ENCODE measurements at regions of chr4 and their contacts with region 1.

Region 1: DNA sequence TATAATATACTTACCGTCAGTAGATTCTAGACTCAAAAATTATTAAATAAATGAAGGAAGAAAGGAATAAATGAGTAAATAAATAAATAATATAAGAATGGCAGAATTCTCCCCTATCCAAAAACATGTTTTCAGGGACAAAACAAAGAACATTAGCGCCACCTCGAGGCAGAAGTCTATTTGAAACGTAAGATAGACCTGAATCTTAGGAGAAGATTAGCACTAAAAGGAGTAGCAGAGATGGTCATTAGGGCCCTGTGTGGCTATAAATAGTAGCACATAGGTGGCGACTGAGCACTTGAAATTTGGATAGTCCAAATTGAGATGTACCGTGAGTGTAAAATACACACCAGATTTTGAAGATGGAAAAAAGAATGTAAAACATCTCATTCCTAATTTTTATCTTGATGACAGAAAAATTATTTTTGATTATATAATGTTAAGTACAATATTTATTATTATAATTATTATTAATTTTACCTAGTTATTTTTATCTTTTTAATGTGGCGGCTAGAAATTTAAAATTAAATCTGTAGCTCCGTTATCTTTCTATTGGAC is 24.3 kb upstream of the SRD5A3 start:
- DNase-seq: peak; percentile 25
- CTCF ChIP-seq: peak; percentile 45

Region 2: DNA sequence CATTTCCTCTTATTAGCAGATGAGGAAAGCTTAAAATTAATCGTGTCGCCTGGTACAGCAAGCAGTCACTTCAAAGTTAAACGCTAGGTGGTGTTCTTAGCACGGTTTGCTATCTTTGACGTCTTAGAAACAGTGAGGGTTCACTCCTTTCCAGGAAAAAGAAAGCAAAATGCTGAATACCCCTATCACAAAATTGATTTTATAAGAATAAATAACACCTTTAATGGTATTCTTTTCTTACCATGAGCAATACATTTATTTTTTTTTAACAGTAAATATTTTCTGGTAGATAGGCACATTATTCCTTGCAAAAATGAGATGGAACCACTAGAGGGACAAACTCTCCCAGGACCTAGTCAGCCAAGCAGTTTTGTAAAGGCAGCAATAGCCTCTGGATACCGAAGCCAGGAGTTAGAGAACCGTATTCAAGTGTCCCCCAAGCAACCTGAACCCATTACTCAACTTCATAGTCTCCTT is 350.3 kb before region 1 on chr4:
- CTCF ChIA-PET with region 1: interaction called, 18 read pairs
- POLR2A ChIA-PET with region 1: no interaction called
- DNase-seq: peak; percentile 15
- CTCF ChIP-seq: peak; percentile 60

Region 3: GRCh38 chr4:55184600-55185523 is 136.9 kb before region 1 on chr4:
- CTCF ChIA-PET with region 1: interaction called, 15 read pairs
- POLR2A ChIA-PET with region 1: no interaction called
- DNase-seq: peak; percentile 16
- CTCF ChIP-seq: peak; percentile 54

Region 4: DNA sequence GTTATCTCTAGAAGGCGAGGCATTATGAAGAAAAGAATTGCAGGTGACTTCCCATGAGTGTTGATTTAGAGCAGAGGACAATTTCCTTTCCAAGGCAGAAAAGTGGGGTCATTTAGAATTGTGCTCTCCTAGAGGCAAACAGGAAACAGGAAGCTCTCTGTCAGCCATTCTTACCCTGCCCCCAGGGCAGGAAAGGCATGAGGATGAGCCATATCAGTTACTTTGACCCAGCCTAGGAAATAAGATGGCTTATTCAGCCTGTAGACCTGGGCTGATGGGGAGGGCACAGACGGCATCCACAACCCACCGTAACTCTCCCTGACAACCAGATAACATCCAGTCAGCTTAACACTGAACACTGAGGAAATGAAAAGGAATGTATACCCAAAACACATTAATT is 107.6 kb before region 1 on chr4:
- CTCF ChIA-PET with region 1: no interaction called
- POLR2A ChIA-PET with region 1: no interaction called
- DNase-seq: no peak
- CTCF ChIP-seq: no peak

Region 5: DNA sequence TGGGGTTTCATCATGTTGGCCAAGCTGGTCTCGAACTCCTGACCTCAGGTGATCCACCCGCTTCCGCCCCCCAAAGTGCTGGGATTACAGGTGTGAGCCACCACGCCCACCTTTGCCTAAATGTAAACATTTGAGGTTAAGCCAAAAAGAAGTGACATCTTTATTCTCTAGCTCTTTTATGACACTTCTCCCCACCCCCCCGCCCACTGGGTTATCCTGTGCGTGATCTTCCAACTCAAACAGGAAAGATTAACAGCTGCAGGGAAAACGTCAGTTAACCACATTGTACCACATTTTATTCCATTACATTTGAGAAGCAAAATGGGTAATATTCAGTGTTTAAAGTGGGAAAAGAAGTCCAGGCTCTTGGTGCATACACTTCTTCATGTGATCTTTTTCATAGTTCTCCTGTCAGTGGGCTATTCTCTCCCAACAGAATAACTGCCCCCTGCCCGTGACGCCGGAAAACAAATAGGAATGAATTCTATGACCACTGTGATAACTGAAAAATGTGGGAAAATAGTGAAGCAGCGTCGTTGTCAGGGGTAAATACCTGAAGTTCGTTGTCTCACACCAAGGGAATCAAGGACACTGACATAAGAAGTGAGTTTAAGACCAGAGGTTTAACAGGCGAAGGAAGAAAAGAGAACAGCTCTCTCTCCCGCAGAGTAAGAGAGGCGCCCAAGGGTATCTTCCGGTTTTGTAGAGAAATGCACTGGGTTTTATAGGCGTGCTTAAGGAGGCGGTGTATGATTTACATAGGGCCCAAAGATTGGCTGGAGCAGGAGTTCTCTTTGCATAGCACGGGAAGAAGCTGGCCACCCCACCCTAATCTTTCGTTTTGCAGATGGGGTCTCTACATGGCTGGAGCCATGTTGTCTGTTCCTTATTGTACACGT is 14.6 kb after region 1 on chr4:
- CTCF ChIA-PET with region 1: interaction called, 10 read pairs
- POLR2A ChIA-PET with region 1: no interaction called
- DNase-seq: no peak
- CTCF ChIP-seq: no peak